Left cardiac atrium (tissue), 4 donors: ENCODE measurements at regions of chr3 and their contacts with region 1.

Region 1: GRCh38 chr3:119676771-119677640 is at the start of gene COX17:
- DNase-seq: peak; percentile 96
- ATAC-seq: peak; percentile 94 to 95
- total RNA-seq, gene COX17: 101 to 120 TPM

Region 2: DNA sequence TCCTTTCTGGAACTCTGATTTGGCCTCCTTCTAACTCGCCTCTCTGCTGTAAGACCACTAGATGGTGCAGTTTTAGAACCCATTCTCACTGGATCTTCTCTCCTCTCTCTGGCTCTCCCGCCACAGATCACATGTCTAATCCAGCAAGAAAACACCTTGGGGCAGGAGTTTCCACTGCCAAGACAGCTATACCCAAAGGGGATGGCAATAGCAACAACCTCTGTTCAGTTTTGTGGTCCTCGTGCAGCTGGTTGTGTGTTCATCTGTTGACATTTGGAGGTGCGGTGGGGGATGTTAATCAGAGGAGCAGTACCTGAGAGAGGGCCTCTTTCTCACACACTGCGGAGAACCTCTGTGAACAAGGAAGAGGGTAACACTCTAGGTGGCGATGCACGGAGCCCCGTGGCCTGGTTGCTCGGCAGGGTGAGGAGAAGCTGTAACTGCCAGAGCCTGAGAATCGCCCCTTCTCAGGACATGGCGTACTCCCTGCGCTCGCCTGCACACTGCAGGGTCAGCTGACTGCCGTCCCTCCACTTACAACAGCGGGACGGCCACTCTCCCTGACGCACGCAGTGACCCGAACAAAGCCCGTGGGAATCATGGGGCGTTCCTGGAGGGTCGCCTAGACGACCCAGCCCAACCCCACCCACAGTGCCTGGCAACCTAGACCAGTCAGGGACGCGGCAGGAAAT is 531.4 kb before region 1 on chr3 and contains the start of gene TEX55:
- intact Hi-C with region 1: loop called in 1 of 2 experiments (anchors 10 kb)
- DNase-seq: peak; percentile 49
- ATAC-seq: peak; percentile 90 to 92
- total RNA-seq, gene TEX55: not detected

Region 3: DNA sequence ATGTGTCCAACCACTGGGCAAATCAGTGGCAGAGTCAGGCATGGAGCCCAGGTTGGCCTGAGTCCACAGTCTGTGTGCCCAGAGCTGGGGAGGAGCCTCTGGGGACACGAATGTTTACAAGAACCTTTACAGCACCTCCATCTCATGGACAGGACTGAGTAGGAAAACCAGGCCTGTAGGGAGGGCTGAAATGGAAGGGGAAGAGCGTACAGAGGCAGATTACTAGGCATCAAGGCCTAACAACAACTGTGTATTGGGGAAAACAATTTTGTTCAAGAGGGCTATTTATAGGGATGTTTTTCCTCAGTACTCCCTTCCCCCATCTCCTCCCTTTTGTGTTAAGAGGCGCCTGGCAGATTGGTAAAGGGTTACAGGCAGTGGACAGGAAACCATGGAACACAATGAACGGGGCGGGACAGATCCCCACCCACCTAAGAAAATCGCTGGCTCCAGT is 397.9 kb before region 1 on chr3:
- intact Hi-C with region 1: loop called in 1 of 2 experiments (anchors 10 kb)
- DNase-seq: peak; percentile 71
- ATAC-seq: peak; percentile 84 to 86

Region 4: GRCh38 chr3:119418641-119419040 is 258.4 kb before region 1 on chr3:
- intact Hi-C with region 1: loop called in 1 of 2 experiments (anchors 10 kb)
- DNase-seq: no peak
- ATAC-seq: peak in 1 of 2 donors; percentile 56

Region 5: DNA sequence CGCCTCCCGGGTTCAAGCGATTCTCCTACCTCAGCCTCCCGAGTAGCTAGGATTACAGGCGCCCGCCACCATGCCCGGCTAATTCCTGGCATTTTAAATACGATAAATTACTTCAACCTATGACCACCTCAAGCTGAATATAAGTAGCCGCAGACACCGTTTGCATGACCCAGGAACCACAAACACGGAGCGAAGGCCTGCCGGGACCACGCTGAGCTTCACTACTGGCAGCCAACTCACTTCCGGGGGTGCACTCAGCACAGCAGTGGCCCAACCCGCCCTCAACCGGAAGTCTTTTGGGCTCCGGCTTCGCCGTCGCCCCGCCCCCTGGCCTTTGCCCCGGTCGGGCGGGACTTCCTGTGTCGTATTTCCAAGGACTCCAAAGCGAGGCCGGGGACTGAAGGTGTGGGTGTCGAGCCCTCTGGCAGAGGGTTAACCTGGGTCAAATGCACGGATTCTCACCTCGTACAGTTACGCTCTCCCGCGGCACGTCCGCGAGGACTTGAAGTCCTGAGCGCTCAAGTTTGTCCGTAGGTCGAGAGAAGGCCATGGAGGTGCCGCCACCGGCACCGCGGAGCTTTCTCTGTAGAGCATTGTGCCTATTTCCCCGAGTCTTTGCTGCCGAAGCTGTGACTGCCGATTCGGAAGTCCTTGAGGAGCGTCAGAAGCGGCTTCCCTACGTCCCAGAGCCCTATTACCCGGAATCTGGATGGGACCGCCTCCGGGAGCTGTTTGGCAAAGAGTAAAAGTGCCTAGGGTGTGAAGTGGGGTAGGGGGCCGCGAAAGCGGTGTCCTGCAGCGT is 178.6 kb before region 1 on chr3 and contains the start of gene TIMMDC1:
- intact Hi-C with region 1: loop called in 1 of 2 experiments (anchors 5 kb)
- DNase-seq: peak; percentile 97
- ATAC-seq: peak; percentile 99 to 100
- total RNA-seq, gene TIMMDC1: 190 to 200 TPM

Region 6: DNA sequence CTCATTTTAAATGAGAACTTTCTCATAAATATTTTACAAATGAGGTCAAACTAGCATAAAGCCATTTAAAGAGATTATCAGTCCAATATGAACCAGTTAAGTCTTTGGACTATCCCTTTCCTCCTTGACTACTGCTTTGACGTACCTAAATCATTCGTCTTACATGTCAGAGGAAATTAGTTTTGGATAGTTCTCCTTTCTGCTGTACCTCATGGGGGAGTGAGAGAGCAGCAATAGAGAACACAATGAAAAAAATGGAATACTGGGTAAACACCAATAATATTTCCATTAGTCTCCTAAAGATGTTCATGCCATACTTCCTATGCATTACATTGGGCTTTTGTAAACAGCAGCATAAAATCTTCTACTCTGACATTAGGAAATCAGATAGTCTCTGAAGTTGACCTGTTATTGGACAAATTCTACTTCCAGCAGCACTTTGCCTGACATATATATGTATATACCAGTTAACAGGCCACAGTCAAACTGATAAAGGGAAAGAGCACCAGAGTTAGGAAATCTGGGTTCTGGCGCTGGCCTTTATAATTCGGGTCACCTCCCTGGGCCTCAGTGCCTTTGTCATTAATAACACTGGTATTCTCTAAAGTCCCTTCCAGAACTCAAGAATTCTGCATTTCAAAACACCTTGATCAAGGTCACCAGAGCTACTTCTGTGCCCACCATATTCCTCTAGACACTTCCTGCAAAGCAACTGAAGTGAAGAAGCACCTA is 151.9 kb before region 1 on chr3:
- intact Hi-C with region 1: loop called in 1 of 2 experiments (anchors 5 kb)
- DNase-seq: no peak
- ATAC-seq: peak in 1 of 2 donors; percentile 32

Region 7: DNA sequence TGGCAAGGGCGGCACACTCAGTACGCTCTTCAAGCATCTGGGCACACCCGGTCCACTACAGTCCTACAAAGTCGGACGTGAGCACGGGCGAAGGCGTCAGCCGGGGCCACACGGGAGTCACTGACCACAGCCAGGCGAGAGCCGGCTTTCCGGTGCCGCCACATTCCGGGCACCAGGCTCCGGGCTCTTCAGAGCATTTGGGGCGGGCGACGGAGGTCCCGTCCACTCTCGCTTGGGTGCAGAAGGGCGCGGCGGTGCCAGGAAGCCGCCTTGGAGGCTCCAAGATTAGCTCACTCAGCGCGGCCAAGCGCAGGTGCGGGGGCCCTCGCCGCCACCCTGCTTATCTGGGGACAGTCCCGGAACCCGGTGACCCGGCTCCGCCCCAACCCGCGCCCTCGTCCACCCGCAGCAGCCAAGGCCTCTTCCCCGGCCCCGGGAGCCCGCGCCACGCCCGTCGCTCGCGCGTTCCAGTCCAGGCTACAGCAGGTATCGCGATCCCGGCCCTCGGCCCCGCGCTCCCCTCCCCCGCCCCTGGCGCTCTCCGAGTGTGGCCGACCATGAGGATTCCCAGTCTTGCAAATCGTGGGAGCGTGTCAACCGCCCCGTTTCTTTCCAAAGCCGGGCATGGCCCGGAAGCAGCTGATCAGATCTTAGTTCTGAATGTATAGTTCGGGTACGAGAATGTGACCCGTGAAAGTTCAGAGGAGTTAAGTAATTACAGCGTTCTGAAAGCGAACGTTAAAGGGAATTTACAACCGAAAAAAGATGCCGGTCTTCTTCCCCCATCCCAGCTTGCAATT is 97.4 kb before region 1 on chr3 and contains the start of gene ADPRH:
- intact Hi-C with region 1: loop called in 1 of 2 experiments (anchors 5 kb)
- DNase-seq: peak; percentile 89
- ATAC-seq: peak; percentile 96 to 97
- total RNA-seq, gene ADPRH: 9.4 to 10.8 TPM

Region 8: DNA sequence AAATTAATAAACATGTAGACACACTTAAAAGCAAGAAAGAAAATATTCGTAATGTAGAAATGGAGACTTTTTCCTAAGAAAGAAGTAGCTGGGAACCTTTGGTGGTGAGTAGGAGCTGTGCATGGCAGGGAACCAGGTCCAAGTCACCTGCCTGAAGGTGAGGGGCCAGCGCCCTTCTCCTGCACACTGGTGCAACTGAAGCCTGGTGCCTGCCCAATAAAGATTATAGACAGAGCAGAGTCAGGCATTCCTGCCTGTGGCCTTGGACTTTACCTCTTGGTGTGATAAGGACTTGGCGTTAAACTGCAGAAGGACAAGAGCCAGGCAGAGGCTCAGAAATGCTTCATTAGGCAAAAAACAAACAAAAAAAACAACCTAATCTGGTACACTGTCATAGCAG is 40.0 kb after region 1 on chr3:
- intact Hi-C with region 1: no loop called
- DNase-seq: no peak
- ATAC-seq: no peak

Region 9: DNA sequence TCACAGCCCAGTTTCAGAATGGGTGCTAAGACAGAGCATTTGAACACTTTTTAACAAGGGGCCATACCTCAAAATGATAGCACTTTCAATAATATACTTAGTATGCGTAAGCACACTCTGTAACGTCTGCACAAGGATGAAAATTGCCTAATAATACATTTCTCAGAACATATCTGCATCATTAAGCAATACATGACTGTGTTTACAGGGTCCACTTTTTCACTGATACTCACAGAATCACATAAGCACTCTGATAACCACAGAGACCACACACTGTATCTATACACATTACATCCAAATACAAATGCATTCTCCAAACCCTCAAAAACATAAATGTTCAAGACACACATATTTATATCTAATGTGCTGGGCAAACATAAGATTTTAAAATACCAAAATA is 184.7 kb after region 1 on chr3:
- intact Hi-C with region 1: no loop called
- DNase-seq: no peak
- ATAC-seq: no peak